ENCODE measurements at regions of chr13 and their contacts with region 1.

Region 1: GRCh38 chr13:73870970-73871935 is 263.0 kb downstream of the KLF12 start:
- DNase-seq: no peak
- H3K4me3 ChIP-seq: no peak overlapping the region
- H3K4me3 Mint-ChIP-seq: peak overlapping the region in 4 of 8 donors; percentile 40 to 52 (median 46)
- H3K27ac ChIP-seq: no peak overlapping the region
- H3K27ac Mint-ChIP-seq: peak overlapping the region; percentile 36 to 84 (median 69)
- H3K4me1 ChIP-seq: peaks cover 42% of the 10 kb centered on the region
- H3K4me1 Mint-ChIP-seq: peaks cover 39 to 52% (median 52%) of the 10 kb centered on the region in 4 donors
- H3K27me3 ChIP-seq: no peaks in the 10 kb centered on the region
- H3K27me3 Mint-ChIP-seq: no peaks in the 10 kb centered on the region

Region 2: DNA sequence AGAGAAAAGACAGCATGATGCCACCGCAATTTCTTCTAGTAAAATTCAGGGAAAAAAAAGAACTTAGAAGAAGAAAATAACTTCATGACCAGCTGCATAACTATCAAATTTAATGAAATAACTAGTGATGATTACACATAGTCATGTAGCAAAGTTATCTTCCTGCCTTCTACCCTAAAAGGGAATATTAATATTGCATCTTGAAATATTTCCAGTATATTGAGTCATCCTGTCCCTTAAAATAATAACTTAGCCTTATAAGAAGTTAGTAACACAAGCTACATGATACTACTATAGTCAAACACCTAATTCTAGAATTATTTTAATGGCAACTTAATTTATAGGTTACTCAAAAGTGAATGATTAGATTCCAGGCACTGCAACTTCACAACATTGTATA is 26.3 kb before region 1 on chr13:
- CTCF ChIA-PET with region 1: no interaction called
- POLR2A ChIA-PET with region 1: no interaction called
- intact Hi-C with region 1: no loop called
- DNase-seq: no peak
- H3K4me3 ChIP-seq: no peak overlapping the region
- H3K4me3 Mint-ChIP-seq: no peak overlapping the region
- H3K27ac ChIP-seq: no peak overlapping the region
- H3K27ac Mint-ChIP-seq: peak overlapping the region in 1 of 7 donors; percentile 33
- H3K4me1 ChIP-seq: peaks cover 24% of the 10 kb centered on the region
- H3K4me1 Mint-ChIP-seq: peaks cover 44 to 72% (median 55%) of the 10 kb centered on the region in 4 donors
- H3K27me3 ChIP-seq: no peaks in the 10 kb centered on the region
- H3K27me3 Mint-ChIP-seq: no peaks in the 10 kb centered on the region

Region 3: DNA sequence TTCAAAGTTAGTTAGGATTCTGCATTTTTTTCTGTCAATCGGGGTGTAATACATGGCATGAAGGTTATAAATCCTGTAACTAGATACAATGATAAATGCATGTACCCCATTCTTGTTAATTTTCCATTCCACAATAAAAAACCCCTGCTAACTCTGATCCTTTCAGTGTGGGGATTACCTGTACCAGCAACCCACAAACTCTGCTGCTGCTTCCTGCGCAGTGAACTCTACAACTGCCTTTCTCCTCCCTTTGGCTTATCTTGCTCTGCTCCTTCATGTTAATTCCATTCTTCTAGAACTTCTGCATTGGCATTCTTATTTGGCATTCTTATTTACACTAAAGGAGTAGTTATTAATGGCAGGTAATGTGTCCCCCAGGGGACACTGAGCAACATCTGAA is 10.1 kb before region 1 on chr13:
- CTCF ChIA-PET with region 1: interaction called, 5 read pairs
- POLR2A ChIA-PET with region 1: interaction called, 11 read pairs
- intact Hi-C with region 1: no loop called
- DNase-seq: peak in 2 of 5 donors; percentile 9 to 39
- H3K4me3 ChIP-seq: no peak overlapping the region
- H3K4me3 Mint-ChIP-seq: peak overlapping the region in 7 of 8 donors; percentile 9 to 78 (median 55)
- H3K27ac ChIP-seq: no peak overlapping the region
- H3K27ac Mint-ChIP-seq: peak overlapping the region; percentile 33 to 86 (median 66)
- H3K4me1 ChIP-seq: peaks cover 80% of the 10 kb centered on the region
- H3K4me1 Mint-ChIP-seq: peaks cover 48 to 57% (median 54%) of the 10 kb centered on the region in 4 donors
- H3K27me3 ChIP-seq: no peaks in the 10 kb centered on the region
- H3K27me3 Mint-ChIP-seq: no peaks in the 10 kb centered on the region

Region 4: GRCh38 chr13:73894995-73895571 is 23.8 kb after region 1 on chr13:
- CTCF ChIA-PET with region 1: no interaction called
- POLR2A ChIA-PET with region 1: no interaction called
- intact Hi-C with region 1: loop called (anchors 2 kb)
- DNase-seq: peak in 1 of 5 donors; percentile 14
- H3K4me3 ChIP-seq: no peak overlapping the region
- H3K4me3 Mint-ChIP-seq: peak overlapping the region in 3 of 8 donors; percentile 5 to 62 (median 25)
- H3K27ac ChIP-seq: no peak overlapping the region
- H3K27ac Mint-ChIP-seq: peak overlapping the region in 4 of 7 donors; percentile 57 to 91 (median 70)
- H3K4me1 ChIP-seq: peaks cover 33% of the 10 kb centered on the region
- H3K4me1 Mint-ChIP-seq: peaks cover 44 to 59% (median 47%) of the 10 kb centered on the region in 4 donors
- H3K27me3 ChIP-seq: no peaks in the 10 kb centered on the region
- H3K27me3 Mint-ChIP-seq: no peaks in the 10 kb centered on the region

Region 5: DNA sequence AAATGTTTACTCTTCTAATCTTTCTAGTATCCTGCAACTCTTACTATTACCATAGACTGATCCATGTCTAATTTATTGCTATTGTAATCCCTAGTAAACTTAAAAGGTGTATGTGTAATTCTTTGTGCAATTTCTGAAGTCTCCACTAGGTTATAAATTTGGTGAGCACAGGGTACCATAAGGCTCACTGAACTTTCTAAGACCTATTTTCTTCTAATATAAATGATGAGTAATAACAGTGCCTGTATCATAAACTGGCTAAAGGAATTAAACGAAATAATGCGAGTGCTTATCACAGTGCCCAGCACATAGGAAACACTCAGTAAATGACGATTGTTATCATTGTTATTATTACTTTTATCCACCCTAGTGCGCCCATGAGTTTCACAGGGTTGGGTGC is 143.9 kb after region 1 on chr13:
- CTCF ChIA-PET with region 1: no interaction called
- POLR2A ChIA-PET with region 1: no interaction called
- intact Hi-C with region 1: no loop called
- DNase-seq: no peak
- H3K4me3 ChIP-seq: no peak overlapping the region
- H3K4me3 Mint-ChIP-seq: no peak overlapping the region
- H3K27ac ChIP-seq: no peak overlapping the region
- H3K27ac Mint-ChIP-seq: no peak overlapping the region
- H3K4me1 ChIP-seq: peaks cover 37% of the 10 kb centered on the region
- H3K4me1 Mint-ChIP-seq: peaks cover 38 to 84% (median 61%) of the 10 kb centered on the region in 4 donors
- H3K27me3 ChIP-seq: no peaks in the 10 kb centered on the region
- H3K27me3 Mint-ChIP-seq: no peaks in the 10 kb centered on the region